ENCODE measurements at regions of chr12 and their contacts with region 1.

Region 1: GRCh38 chr12:95318071-95318545 is 100.5 kb downstream of the VEZT start:
- DNase-seq: no peak
- H3K4me3 ChIP-seq: no peak overlapping the region
- H3K27ac ChIP-seq: no peak overlapping the region
- H3K4me1 ChIP-seq: peaks cover 15% of the 10 kb centered on the region
- H3K27me3 ChIP-seq: no peaks in the 10 kb centered on the region
- CTCF ChIP-seq: no peak
- POLR2A ChIP-seq: no peak

Region 2: DNA sequence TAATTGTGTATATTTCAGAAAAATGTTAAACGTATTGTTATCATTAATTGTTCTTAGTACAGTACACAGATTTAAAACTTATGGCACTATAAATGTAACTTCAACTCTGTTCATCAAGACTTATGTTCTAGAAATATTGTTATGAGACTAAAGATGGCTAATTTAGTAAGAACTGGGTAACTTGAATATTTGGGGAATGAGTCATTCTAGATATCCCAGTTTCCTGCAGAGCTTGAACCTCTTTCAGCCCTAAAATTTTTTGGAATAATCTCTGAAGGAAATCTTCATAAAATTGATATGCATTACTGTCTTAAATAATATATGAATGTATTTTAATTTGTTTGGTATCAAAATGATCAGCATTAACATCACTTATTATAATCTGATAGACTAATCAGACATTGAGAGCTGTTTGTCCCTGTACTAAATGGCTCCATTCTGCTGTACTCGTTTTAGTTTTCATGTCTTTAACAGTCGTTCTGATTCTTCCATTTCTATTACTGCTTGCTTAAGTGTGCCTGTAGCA is 13.4 kb before region 1 on chr12:
- CTCF ChIA-PET with region 1: interaction called, 4 read pairs
- POLR2A ChIA-PET with region 1: no interaction called
- dilution Hi-C with region 1: no loop called
- intact Hi-C with region 1: loop called (anchors 1 kb)
- DNase-seq: no peak
- H3K4me3 ChIP-seq: no peak overlapping the region
- H3K27ac ChIP-seq: no peak overlapping the region
- H3K4me1 ChIP-seq: peaks cover 34% of the 10 kb centered on the region
- H3K27me3 ChIP-seq: no peaks in the 10 kb centered on the region
- CTCF ChIP-seq: no peak
- POLR2A ChIP-seq: no peak

Region 3: DNA sequence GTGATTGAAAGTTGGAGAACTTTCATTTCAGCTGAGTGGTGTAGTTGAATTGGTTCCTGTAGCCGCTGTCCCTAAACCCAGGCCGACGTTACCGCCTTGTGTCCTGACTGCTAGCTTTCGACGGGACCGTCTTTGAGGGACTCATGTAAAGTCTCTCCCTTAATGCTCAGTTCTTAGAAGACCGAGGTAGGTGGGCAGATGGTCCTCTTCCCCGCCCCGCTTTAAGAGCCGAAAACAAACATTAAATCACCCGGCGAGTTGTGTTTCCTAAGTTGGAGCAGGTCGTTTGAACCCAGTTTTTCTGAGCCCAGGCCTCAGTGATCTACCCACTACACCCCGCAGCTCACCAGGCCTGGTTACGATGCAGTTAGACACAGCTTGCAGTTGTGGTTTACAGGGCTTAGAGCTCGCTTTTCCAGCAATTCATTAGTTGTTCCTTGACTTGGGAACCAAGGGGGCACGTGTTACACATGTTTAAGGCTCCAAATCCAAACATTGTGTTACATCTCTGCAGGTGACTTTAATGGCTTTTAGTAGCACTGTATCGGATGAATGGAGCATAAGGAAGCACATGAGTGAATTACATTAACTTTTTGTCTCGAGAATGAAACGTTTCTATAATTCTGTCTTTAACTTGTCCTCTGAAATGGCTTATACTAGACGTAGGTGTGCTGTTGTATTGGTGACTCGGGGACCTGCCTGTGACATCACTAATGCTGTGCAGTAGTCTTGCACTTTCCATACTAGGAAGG is 1589.7 kb after region 1 on chr12:
- CTCF ChIA-PET with region 1: no interaction called
- POLR2A ChIA-PET with region 1: no interaction called
- dilution Hi-C with region 1: no loop called
- intact Hi-C with region 1: no loop called
- DNase-seq: peak; percentile 59
- H3K4me3 ChIP-seq: peak overlapping the region; percentile 77 to 92 (median 90)
- H3K27ac ChIP-seq: peak overlapping the region; percentile 49
- H3K4me1 ChIP-seq: peaks cover 19% of the 10 kb centered on the region
- H3K27me3 ChIP-seq: no peaks in the 10 kb centered on the region
- CTCF ChIP-seq: no peak
- POLR2A ChIP-seq: no peak

Measured in endothelial cell of umbilical vein (primary cell).